Endothelial cell of umbilical vein (primary cell): ENCODE measurements at regions of chr1 and their contacts with region 1.

Region 1: DNA sequence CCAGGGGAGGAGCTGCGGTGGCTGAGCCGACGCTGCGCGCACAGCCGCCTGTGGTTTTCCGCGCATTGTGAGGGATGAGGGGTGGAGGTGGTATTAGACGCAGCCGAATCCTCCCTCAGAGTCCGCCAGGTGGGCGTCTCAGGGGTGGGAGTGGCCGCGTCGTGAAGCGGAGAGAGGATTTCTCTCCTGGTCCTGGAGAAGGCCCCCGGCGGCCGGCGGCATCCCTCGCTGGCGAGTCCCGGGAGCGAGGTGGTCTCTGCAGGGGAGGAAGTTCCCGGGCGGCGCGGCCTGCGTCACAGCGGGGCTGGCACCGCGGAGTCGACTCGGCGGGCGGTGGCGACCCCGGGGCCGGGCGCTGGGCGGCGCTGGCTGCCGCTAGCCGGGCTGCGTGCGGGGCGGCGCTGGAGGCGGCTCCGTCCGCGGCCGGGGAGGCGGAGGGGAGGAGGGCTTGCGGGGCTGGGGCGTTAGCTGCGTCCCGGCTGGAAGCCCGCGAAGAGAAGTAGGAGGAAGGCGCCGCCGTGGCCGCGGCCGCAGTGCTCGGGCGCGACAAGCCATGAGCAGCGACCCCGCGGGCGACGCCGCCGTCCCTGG is at the start of gene LRRC8C:
- DNase-seq: peak; percentile 84
- H3K4me3 ChIP-seq: peak within 1 kb of the TSS; percentile 72 to 100 (median 99)
- H3K27ac ChIP-seq: peak within 1 kb of the TSS; percentile 97
- H3K4me1 ChIP-seq: peaks cover 32% of the 10 kb centered on the region
- H3K27me3 ChIP-seq: no peaks in the 10 kb centered on the region
- CTCF ChIP-seq: peak; percentile 18 to 69
- POLR2A ChIP-seq: peak; percentile 73
- total RNA-seq, gene LRRC8C: 40.6 and 51.5 TPM in 2 replicates

Region 2: DNA sequence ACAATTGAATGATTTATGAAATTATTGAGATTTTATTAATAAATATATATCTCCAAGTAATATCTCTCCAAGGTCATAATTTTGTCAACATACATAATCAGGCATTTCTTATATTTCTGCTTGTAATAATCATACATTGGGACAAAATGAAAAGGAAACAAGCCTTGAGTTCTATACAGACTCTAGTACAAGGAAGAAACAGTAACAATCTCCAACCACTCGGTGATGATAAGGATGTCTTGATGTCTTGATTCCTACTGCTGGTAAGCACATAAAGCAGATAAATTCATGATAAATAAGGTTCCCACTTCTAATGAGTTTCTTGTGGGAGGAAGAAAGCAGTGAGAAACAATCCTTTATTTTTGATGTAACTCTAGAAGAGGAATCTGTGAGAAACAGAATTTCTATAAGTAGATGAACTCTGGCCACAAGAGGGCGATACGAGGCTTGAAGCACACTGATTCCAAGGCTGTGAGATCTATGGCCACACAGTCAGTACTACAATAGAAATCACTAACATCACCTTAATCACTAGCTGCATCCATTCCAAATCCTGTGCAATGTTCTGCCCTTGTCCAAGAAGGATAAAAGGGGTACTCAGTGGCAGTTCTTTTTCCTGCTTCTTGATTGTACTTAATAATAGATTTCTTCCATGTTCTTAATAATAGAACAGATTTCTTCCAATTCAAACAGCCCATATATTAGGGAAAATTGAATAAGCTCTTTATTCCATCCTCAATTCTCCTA is 149.6 kb before region 1 on chr1:
- CTCF ChIA-PET with region 1: interaction called, 18 read pairs
- POLR2A ChIA-PET with region 1: no interaction called
- dilution Hi-C with region 1: no loop called
- intact Hi-C with region 1: no loop called
- DNase-seq: peak; percentile 83
- H3K4me3 ChIP-seq: no peak overlapping the region
- H3K27ac ChIP-seq: no peak overlapping the region
- H3K4me1 ChIP-seq: no peaks in the 10 kb centered on the region
- H3K27me3 ChIP-seq: peaks cover 0 to 7% of the 10 kb centered on the region in 2 experiments
- CTCF ChIP-seq: peak; percentile 61 to 67
- POLR2A ChIP-seq: no peak

Region 3: DNA sequence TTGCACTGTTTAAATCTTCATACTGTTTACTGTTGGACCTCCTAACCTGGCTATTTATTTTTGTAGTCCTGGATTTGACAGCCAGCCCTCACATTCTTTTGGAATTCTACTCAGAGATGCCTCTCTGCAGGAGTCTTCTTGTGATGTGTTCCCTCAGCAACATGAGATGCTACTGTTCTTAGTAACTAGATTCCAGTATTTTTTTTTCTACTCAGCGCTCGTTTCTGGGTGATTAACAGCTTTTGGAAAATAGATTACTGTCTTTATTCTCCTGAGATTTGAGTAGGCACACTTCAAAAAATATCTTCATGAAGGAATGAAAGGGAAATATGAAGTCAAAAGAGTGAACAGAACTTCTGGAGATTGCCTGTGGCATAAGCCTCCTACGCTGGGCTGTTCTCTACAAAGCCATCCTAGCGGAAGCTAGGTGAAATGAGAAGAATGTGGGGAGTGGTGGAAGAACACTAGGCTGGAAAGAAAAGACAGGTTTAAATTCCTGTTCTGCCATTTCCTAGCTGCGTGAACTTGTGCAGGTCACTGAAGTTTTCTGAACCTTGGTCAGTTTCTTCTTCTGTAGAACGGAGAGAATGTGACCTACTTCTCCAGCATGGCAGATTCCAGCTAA is 76.1 kb after region 1 on chr1:
- CTCF ChIA-PET with region 1: interaction called, 4 read pairs
- POLR2A ChIA-PET with region 1: no interaction called
- dilution Hi-C with region 1: no loop called
- intact Hi-C with region 1: loop called (anchors 1 kb)
- DNase-seq: no peak
- H3K4me3 ChIP-seq: no peak overlapping the region
- H3K27ac ChIP-seq: peak overlapping the region; percentile 97
- H3K4me1 ChIP-seq: peaks cover 43% of the 10 kb centered on the region
- H3K27me3 ChIP-seq: no peaks in the 10 kb centered on the region
- CTCF ChIP-seq: no peak
- POLR2A ChIP-seq: no peak

Region 4: DNA sequence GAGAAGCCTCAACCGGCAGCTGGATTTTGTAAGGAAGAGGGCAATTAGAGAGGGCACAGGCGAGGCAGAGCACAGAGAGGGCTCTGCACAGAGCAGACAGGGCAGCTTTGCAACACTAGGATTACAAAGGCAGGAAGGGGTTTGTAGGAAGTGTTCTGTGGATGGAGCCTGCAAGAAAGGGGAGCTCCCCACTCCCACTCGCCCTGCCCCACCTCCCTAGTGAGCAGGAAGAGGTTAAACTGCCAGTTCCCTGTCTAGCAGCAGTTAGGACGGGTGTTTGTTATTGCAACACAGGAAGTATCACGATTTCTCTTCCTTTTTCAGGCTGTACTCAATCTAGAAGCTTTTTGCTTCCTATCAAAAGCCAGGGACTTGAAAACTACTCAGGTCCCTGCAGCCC is 124.8 kb after region 1 on chr1:
- CTCF ChIA-PET with region 1: interaction called, 230 read pairs
- POLR2A ChIA-PET with region 1: interaction called, 16 read pairs
- dilution Hi-C with region 1: no loop called
- intact Hi-C with region 1: loop called (anchors 1 kb)
- DNase-seq: peak; percentile 85
- H3K4me3 ChIP-seq: peak overlapping the region in 1 of 3 experiments; percentile 23
- H3K27ac ChIP-seq: peak overlapping the region; percentile 49
- H3K4me1 ChIP-seq: peaks cover 51% of the 10 kb centered on the region
- H3K27me3 ChIP-seq: no peaks in the 10 kb centered on the region
- CTCF ChIP-seq: no peak
- POLR2A ChIP-seq: no peak

Region 5: GRCh38 chr1:89994805-89995597 is 362.2 kb after region 1 on chr1 and contains the start of gene ZNF326:
- CTCF ChIA-PET with region 1: no interaction called
- POLR2A ChIA-PET with region 1: no interaction called
- dilution Hi-C with region 1: no loop called
- intact Hi-C with region 1: loop called (anchors 2 kb)
- DNase-seq: peak; percentile 98
- H3K4me3 ChIP-seq: peak within 1 kb of the TSS; percentile 89 to 99 (median 98)
- H3K27ac ChIP-seq: peak within 1 kb of the TSS; percentile 94
- H3K4me1 ChIP-seq: peaks cover 19% of the 10 kb centered on the region
- H3K27me3 ChIP-seq: no peaks in the 10 kb centered on the region
- CTCF ChIP-seq: no peak
- POLR2A ChIP-seq: peak; percentile 98
- total RNA-seq, gene ZNF326: 29.7 and 29.9 TPM in 2 replicates